GM10248 (cell line): ENCODE measurements at regions of chr5 and their contacts with region 1.

Region 1: DNA sequence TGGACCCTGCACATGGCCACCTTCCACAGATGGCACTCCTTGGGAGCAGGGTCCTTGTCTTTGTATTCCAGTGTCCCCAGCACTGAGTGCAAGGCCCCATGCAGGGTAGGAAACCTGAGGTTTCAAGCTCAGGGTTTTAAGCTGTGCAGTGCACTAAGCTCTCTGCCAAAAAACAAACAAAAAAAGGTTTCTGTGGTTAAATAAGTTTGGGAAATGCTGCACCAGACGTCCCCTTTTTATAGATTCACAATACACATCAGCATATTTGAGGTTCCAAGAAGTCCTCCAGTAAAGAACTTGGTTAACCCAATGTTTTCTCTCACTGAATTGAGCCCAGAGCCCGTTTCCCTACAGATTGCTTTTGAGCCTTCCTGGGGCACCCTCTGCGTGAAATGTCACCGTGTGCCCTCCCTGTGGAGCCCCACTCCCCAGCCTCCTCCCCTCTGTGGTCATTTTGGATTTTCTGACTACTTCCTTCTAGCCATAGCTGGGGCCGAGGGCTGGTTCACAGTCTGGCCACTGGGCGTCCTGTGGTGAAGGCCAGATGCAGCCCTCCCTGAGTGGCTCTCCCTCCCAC is 17.1 kb downstream of the DELE1 start:
- DNase-seq: no peak
- CTCF ChIP-seq: no peak

Region 2: DNA sequence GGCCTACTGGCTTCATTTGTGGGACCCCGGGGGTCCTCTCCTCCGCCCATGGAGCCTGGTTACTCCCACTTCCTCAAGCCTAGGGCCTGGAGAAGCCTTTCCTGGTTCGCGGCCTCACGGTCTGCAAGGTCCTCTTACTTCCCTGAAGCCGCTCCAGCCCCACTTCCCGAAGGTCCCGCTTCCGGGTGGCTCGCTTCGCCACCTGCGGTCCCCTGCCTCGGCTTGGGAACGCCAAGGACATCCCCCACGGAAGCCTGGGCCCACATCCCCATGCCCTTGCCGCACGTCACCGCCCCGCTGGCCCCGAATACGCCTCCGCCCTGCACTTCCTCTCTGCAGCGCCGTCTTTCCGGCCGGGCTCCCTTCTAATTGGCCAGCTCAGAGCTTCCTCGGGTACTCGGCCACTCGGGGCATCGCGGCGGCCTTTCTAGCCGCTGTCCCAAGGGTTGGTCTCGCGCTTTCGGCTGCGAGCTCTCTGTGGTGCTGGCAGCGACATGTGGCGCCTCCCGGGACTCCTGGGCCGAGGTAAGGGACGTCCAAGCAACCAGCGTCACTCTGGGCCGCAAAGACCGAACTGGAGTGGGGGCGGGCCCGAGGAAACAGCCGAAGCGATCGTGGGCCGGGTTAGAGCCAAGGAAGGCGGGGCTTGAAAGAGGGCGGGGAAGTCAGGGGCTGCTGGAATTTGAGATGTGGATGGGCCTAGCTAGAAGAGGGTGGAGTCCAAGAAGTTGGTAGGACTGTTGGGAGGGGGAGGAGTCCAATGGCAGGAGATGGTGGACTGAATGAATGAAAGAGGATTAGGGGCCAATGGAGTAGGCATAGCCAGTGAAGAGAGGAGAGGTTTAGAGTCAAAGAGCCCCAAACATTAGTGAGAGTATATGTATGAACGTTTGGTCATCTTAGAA is 17.1 kb before region 1 on chr5 and contains the start of gene DELE1:
- CTCF ChIA-PET with region 1: interaction called, 18 read pairs
- POLR2A ChIA-PET with region 1: no interaction called
- DNase-seq: peak; percentile 95
- CTCF ChIP-seq: no peak

Region 3: GRCh38 chr5:141951332-141951781 is 10.6 kb after region 1 on chr5:
- CTCF ChIA-PET with region 1: interaction called, 11 read pairs
- POLR2A ChIA-PET with region 1: no interaction called
- DNase-seq: peak; percentile 62
- CTCF ChIP-seq: peak; percentile 4

Region 4: DNA sequence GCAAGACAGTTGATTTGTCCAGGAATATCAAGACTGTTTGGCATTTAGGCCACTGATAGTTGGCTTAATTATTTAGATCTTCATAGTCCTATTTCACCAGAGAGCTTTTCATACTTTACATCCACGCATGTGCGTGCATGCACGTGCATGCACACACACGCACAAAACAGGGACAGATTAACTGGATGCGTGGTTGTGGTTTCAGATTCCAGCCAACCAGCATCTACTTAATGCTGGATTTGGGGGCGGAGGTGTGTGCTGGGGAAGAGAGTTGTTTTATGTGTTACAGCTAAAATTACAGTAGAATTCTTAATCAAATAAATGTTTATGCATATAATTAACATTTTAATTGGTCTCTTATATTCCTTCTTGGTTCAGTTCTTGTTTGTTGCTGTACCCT is 35.4 kb after region 1 on chr5:
- CTCF ChIA-PET with region 1: no interaction called
- POLR2A ChIA-PET with region 1: no interaction called
- DNase-seq: no peak
- CTCF ChIP-seq: no peak